Heart left ventricle (tissue), 16 donors: ENCODE measurements at regions of chr18 and their contacts with region 1.

Region 1: GRCh38 chr18:44679056-44679905 is 1.4 kb upstream of the SETBP1 start:
- DNase-seq: peak; percentile 89 to 93 (median 89)
- ATAC-seq: peak; percentile 92 to 98 (median 97)
- H3K4me3 ChIP-seq: peak overlapping the region; percentile 47 to 96 (median 80)
- H3K27ac ChIP-seq: peak overlapping the region; percentile 95 to 100 (median 98)
- H3K4me1 ChIP-seq: peaks cover 0 to 32% (median 16%) of the 10 kb centered on the region in 12 donors
- H3K27me3 ChIP-seq: peaks cover 0 to 16% (median 0%) of the 10 kb centered on the region in 9 donors
- CTCF ChIP-seq: peak; percentile 47 to 85 (median 74)
- POLR2A ChIP-seq: peak in 1 of 2 donors; percentile 77

Region 2: GRCh38 chr18:44594799-44595467 is 84.3 kb before region 1 on chr18:
- intact Hi-C with region 1: loop called in 1 of 10 experiments (anchors 10 kb)
- DNase-seq: no peak
- ATAC-seq: peak; percentile 63 to 89 (median 74)
- H3K4me3 ChIP-seq: no peak overlapping the region
- H3K27ac ChIP-seq: peak overlapping the region in 3 of 12 donors; percentile 13 to 34 (median 34)
- H3K4me1 ChIP-seq: peaks cover 0 to 60% (median 17%) of the 10 kb centered on the region in 12 donors
- H3K27me3 ChIP-seq: no peaks in the 10 kb centered on the region
- CTCF ChIP-seq: no peak
- POLR2A ChIP-seq: no peak

Region 3: DNA sequence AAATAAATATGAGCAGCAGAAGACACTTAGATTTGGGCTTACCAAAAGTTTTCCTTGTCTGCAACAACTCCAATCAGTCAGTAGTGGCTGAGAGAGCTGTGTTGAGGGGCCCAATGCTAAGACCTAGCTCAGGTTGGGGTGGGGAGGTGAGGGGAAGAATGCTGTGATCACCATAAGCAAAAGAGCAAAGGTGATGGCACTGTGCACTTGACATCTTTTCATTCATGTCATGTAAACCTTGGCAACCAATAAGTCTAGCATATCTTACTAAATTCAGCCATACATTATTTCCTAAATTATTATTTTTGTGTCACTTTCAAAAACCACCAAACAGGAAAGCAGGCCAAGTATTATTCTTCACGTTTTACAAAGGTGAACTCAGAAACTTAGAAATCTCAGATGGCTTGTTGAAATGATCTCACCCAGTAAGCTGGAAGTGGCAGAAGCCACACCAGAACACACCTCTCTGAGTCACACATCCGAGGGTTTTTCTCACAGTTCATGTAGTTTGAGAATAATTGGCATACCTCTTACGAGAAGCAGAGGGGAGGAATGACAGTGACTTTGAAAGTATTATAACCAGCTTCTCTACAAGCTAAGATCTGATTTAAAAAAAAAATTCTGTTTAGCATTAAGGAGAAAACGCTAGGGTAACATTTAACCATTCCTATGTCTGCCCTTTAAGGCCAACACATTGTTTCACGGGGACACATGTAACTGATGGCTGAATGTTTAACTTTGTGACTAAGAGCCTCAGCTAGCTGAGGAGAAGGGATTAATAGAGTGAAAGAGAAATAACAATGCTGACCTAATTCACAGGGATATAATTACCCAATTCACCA is 41.9 kb before region 1 on chr18:
- intact Hi-C with region 1: no loop called
- DNase-seq: no peak
- ATAC-seq: no peak
- H3K4me3 ChIP-seq: no peak overlapping the region
- H3K27ac ChIP-seq: no peak overlapping the region
- H3K4me1 ChIP-seq: peaks cover 0 to 4% (median 0%) of the 10 kb centered on the region in 12 donors
- H3K27me3 ChIP-seq: no peaks in the 10 kb centered on the region
- CTCF ChIP-seq: no peak
- POLR2A ChIP-seq: no peak

Region 4: DNA sequence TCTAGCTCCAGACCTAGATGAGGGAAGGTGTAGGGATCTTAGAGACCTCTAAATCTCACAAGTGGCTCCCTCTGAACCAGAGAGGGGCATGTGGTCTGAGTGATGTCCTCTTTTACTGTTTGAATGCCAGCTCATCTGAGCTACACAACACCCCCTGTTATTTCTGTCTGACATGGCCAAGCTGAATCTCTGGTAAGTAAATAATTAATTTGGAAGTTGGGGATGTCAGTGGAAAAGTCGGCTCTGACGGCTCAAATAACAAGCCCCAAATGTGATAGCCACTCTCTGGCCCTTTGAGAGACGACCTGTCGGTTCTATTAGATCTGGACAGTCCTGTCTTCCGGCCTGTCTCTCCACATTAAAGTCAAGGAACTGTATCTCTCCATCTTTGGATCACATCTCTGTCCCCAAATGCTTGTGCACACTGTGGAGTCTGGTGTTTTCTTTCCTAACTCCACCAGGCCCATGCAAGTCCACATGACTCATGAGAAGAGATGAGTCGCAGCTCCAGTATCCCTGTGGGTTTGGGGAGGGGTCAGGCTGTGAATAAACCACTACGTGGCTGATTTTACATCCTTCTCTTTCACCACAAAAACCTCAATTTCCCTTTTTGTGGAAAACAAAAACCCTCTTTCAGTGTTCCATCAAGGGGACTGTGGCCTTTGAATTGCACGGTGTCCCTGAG is 53.9 kb after region 1 on chr18:
- intact Hi-C with region 1: no loop called
- DNase-seq: no peak
- ATAC-seq: peak in 3 of 4 donors; percentile 38 to 75 (median 70)
- H3K4me3 ChIP-seq: no peak overlapping the region
- H3K27ac ChIP-seq: peak overlapping the region in 1 of 12 donors; percentile 40
- H3K4me1 ChIP-seq: peaks cover 0 to 35% (median 2%) of the 10 kb centered on the region in 12 donors
- H3K27me3 ChIP-seq: peaks cover 0 to 30% (median 0%) of the 10 kb centered on the region in 9 donors
- CTCF ChIP-seq: no peak
- POLR2A ChIP-seq: no peak

Region 5: DNA sequence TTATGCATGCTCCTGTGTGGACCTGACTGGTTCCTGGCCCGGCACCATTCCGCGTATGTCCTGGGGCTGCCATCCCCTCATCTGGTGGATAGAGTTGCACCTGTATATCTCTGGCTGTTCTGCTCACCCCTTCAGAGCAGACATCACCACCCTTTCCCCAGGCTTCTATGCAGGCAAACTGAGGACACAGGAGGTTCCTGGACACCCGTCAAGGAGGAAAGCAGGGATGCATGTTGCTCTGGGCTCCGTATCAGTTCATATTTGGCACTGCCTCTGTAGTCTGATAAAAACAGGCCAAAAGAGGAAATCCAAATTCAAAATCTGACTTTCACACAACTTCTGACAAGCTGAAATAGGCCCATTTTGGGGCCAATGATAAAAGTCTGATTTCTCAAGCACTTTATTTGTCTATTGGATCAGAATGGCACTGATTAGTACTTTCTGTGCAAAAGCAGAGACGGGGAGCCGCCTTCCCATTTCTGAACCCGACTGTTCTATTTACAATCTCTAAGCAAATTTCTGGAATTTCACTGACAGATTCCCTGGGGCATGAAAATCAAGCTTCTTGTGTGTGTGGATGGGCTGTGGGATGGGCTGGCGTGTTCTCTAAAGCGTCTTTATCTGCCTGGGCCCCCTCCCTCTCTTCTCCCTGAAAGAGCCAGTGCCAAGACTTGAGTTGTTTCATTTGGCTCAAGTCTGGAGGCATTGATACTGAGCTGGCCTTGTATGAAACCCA is 98.3 kb after region 1 on chr18:
- intact Hi-C with region 1: loop called in 2 of 10 experiments (anchors 5 to 10 kb)
- DNase-seq: peak in 2 of 5 donors; percentile 31 to 48
- ATAC-seq: peak; percentile 28 to 49 (median 44)
- H3K4me3 ChIP-seq: no peak overlapping the region
- H3K27ac ChIP-seq: peak overlapping the region in 10 of 12 donors; percentile 0 to 69 (median 36)
- H3K4me1 ChIP-seq: peaks cover 0 to 54% (median 16%) of the 10 kb centered on the region in 12 donors
- H3K27me3 ChIP-seq: peaks cover 0 to 5% (median 0%) of the 10 kb centered on the region in 9 donors
- CTCF ChIP-seq: no peak
- POLR2A ChIP-seq: no peak

Region 6: DNA sequence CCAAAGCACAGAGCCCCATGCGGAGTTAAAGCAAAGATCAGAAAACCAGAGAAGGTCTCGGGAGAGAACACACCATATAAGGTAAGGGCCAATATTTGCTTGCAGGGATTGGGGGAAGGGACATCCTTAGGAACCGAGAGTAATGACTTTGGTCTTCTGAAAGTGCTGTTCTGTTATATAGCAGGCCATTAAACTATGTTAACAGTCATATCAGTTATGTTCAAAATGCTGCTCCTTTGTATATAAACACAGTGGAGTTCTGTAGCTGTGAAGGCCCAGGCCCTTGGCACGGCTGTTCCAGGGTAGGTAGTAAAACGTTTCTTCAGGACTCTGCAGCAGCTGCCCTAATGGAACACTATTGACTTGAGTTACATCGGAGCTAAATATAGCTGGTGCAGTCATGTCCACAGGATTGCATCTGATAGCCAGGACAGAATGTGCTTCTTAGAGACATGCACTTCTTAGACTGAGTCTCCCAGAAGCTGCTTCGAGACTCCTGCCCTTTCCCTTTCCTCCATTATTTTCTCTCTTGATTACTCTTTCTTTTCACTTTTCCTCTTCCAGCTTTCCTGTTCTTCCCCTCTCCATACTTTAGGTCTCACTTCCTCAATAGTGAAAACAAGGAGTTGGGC is 123.9 kb after region 1 on chr18:
- intact Hi-C with region 1: loop called in 3 of 10 experiments (anchors 5 to 10 kb)
- DNase-seq: peak in 3 of 5 donors; percentile 38 to 55 (median 39)
- ATAC-seq: peak; percentile 85 to 95 (median 90)
- H3K4me3 ChIP-seq: no peak overlapping the region
- H3K27ac ChIP-seq: peak overlapping the region in 11 of 12 donors; percentile 1 to 87 (median 58)
- H3K4me1 ChIP-seq: peaks cover 0 to 70% (median 40%) of the 10 kb centered on the region in 12 donors
- H3K27me3 ChIP-seq: no peaks in the 10 kb centered on the region
- CTCF ChIP-seq: no peak
- POLR2A ChIP-seq: no peak

Region 7: GRCh38 chr18:44834867-44835465 is 155.7 kb after region 1 on chr18:
- intact Hi-C with region 1: loop called in 1 of 10 experiments (anchors 5 kb)
- DNase-seq: no peak
- ATAC-seq: no peak
- H3K4me3 ChIP-seq: no peak overlapping the region
- H3K27ac ChIP-seq: peak overlapping the region in 1 of 12 donors; percentile 53
- H3K4me1 ChIP-seq: peaks cover 0 to 58% (median 19%) of the 10 kb centered on the region in 12 donors
- H3K27me3 ChIP-seq: no peaks in the 10 kb centered on the region
- CTCF ChIP-seq: peak in 1 of 12 donors; percentile 24
- POLR2A ChIP-seq: no peak

Region 8: GRCh38 chr18:45014047-45014501 is 334.8 kb after region 1 on chr18:
- intact Hi-C with region 1: loop called in 3 of 10 experiments (anchors 5 to 10 kb)
- DNase-seq: peak in 1 of 5 donors; percentile 55
- ATAC-seq: peak in 3 of 4 donors; percentile 30 to 85 (median 64)
- H3K4me3 ChIP-seq: no peak overlapping the region
- H3K27ac ChIP-seq: peak overlapping the region in 2 of 12 donors; percentile 7 to 55
- H3K4me1 ChIP-seq: peaks cover 0 to 41% (median 6%) of the 10 kb centered on the region in 12 donors
- H3K27me3 ChIP-seq: no peaks in the 10 kb centered on the region
- CTCF ChIP-seq: peak in 2 of 12 donors; percentile 50 to 69
- POLR2A ChIP-seq: no peak

Region 9: GRCh38 chr18:45212181-45213039 is 533.1 kb after region 1 on chr18:
- intact Hi-C with region 1: loop called in 9 of 10 experiments (anchors 2 to 10 kb)
- DNase-seq: peak; percentile 76 to 86 (median 81)
- ATAC-seq: peak; percentile 81 to 98 (median 97)
- H3K4me3 ChIP-seq: no peak overlapping the region
- H3K27ac ChIP-seq: no peak overlapping the region
- H3K4me1 ChIP-seq: no peaks in the 10 kb centered on the region
- H3K27me3 ChIP-seq: peaks cover 0 to 3% (median 0%) of the 10 kb centered on the region in 9 donors
- CTCF ChIP-seq: peak; percentile 84 to 99 (median 92)
- POLR2A ChIP-seq: no peak